ENCODE measurements at regions of chr2 and their contacts with region 1.

Region 1: DNA sequence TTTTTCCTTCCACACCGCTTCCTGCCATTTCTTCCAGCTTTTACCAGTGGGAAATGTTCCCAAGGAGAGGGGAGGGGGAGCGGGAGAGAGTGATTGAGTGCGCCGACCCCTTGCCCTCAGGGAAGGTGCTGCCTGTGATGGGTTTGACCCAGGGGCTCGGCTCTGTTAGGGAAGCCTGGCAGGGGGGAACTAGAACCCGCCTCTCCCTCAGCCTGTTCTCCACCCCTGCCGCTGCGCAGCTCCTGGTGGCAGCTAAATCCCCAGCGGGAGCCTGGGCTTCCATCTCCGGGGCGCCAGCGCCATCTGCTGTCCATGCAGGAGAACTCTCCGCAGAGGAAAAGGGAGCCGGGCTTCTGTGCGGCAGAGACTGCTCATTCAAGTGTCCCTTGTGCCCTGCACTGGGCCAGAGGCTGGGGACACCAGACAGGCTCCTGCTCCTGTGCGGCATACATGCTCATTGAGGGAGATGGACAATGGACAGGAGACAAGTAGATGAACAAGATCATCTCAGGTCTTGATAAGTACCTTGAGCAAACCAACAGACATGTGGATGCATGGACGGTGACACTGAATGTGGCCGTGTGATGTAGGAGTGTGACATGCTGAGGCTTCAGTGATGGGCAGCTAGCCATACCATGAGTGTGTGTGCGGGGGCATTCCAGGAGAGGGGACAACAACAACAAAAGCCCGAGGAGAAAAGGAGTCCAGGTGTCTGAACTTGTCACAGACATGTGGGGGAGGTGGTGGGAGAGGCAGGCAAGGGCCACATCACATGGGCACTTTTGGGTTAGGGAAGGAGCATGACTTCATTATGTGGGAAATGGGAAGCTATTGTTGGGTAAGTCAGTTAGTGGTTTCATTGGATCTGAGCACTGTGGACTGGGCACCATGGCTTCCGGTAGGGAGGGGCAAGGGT is 13.3 kb downstream of the CHPF start:
- DNase-seq: peak; percentile 70 to 82 (median 78)
- H3K4me3 ChIP-seq: no peak overlapping the region
- H3K4me3 Mint-ChIP-seq: peak overlapping the region in 1 of 2 donors; percentile 65
- H3K27ac ChIP-seq: no peak overlapping the region
- H3K27ac Mint-ChIP-seq: peak overlapping the region in 1 of 7 donors; percentile 70
- H3K4me1 ChIP-seq: no peaks in the 10 kb centered on the region
- H3K4me1 Mint-ChIP-seq: no peaks in the 10 kb centered on the region
- H3K27me3 ChIP-seq: peaks cover 15 to 34% of the 10 kb centered on the region in 2 donors
- H3K27me3 Mint-ChIP-seq: peaks cover 51 to 60% (median 58%) of the 10 kb centered on the region in 3 donors
- CTCF ChIP-seq: peak; percentile 93

Region 2: GRCh38 chr2:219402665-219403515 is 127.4 kb before region 1 on chr2:
- intact Hi-C with region 1: loop called (anchors 2 kb)
- DNase-seq: peak; percentile 54 to 72 (median 71)
- H3K4me3 ChIP-seq: no peak overlapping the region
- H3K4me3 Mint-ChIP-seq: no peak overlapping the region
- H3K27ac ChIP-seq: no peak overlapping the region
- H3K27ac Mint-ChIP-seq: no peak overlapping the region
- H3K4me1 ChIP-seq: peaks cover 18 to 20% of the 10 kb centered on the region in 2 donors
- H3K4me1 Mint-ChIP-seq: peaks cover 16% of the 10 kb centered on the region
- H3K27me3 ChIP-seq: no peaks in the 10 kb centered on the region
- H3K27me3 Mint-ChIP-seq: peaks cover 8 to 16% (median 11%) of the 10 kb centered on the region in 3 donors
- CTCF ChIP-seq: peak; percentile 94

Region 3: GRCh38 chr2:219459460-219460311 is 70.6 kb before region 1 on chr2:
- intact Hi-C with region 1: loop called (anchors 5 kb)
- DNase-seq: peak; percentile 15 to 38 (median 37)
- H3K4me3 ChIP-seq: no peak overlapping the region
- H3K4me3 Mint-ChIP-seq: no peak overlapping the region
- H3K27ac ChIP-seq: no peak overlapping the region
- H3K27ac Mint-ChIP-seq: no peak overlapping the region
- H3K4me1 ChIP-seq: peaks cover 0 to 6% of the 10 kb centered on the region in 2 donors
- H3K4me1 Mint-ChIP-seq: peaks cover 8% of the 10 kb centered on the region
- H3K27me3 ChIP-seq: no peaks in the 10 kb centered on the region
- H3K27me3 Mint-ChIP-seq: peaks cover 2 to 7% (median 4%) of the 10 kb centered on the region in 3 donors
- CTCF ChIP-seq: peak; percentile 90

Region 4: GRCh38 chr2:219475697-219476651 is 54.3 kb before region 1 on chr2:
- intact Hi-C with region 1: loop called (anchors 1 to 5 kb)
- DNase-seq: peak; percentile 19 to 38 (median 36)
- H3K4me3 ChIP-seq: no peak overlapping the region
- H3K4me3 Mint-ChIP-seq: no peak overlapping the region
- H3K27ac ChIP-seq: no peak overlapping the region
- H3K27ac Mint-ChIP-seq: peak overlapping the region in 1 of 7 donors; percentile 41
- H3K4me1 ChIP-seq: no peaks in the 10 kb centered on the region
- H3K4me1 Mint-ChIP-seq: peaks cover 2% of the 10 kb centered on the region
- H3K27me3 ChIP-seq: peaks cover 0 to 2% of the 10 kb centered on the region in 2 donors
- H3K27me3 Mint-ChIP-seq: peaks cover 7 to 22% (median 20%) of the 10 kb centered on the region in 3 donors
- CTCF ChIP-seq: peak; percentile 79

Region 5: DNA sequence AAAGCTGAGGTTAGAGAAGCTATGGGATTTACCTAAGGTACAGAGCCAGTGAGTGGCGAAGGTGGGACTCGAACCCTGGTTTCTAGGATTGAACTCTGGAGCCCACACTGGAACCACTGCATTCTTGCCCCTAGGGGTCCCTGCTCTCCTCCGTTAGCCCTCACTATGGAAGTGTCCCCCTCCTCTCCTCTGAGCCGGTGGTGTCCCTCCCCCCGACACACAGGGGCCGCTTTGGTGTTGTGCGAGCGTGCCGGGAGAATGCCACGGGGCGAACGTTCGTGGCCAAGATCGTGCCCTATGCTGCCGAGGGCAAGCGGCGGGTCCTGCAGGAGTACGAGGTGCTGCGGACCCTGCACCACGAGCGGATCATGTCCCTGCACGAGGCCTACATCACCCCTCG is 40.1 kb before region 1 on chr2:
- intact Hi-C with region 1: loop called (anchors 5 kb)
- DNase-seq: no peak
- H3K4me3 ChIP-seq: no peak overlapping the region
- H3K4me3 Mint-ChIP-seq: no peak overlapping the region
- H3K27ac ChIP-seq: no peak overlapping the region
- H3K27ac Mint-ChIP-seq: peak overlapping the region in 2 of 7 donors; percentile 38 to 48
- H3K4me1 ChIP-seq: no peaks in the 10 kb centered on the region
- H3K4me1 Mint-ChIP-seq: no peaks in the 10 kb centered on the region
- H3K27me3 ChIP-seq: peaks cover 24 to 47% of the 10 kb centered on the region in 2 donors
- H3K27me3 Mint-ChIP-seq: peaks cover 49 to 77% (median 56%) of the 10 kb centered on the region in 3 donors
- CTCF ChIP-seq: no peak

Region 6: GRCh38 chr2:219498280-219499057 is 31.8 kb before region 1 on chr2 and contains the start of gene GMPPA:
- intact Hi-C with region 1: loop called (anchors 5 kb)
- DNase-seq: peak; percentile 93 to 95 (median 94)
- H3K4me3 ChIP-seq: peak within 1 kb of the TSS; percentile 58 to 93 (median 80)
- H3K4me3 Mint-ChIP-seq: peak within 1 kb of the TSS; percentile 98 to 100
- H3K27ac ChIP-seq: peak within 1 kb of the TSS; percentile 89 to 90
- H3K27ac Mint-ChIP-seq: peak within 1 kb of the TSS; percentile 94 to 99 (median 97)
- H3K4me1 ChIP-seq: peaks cover 28 to 43% of the 10 kb centered on the region in 2 donors
- H3K4me1 Mint-ChIP-seq: peaks cover 38% of the 10 kb centered on the region
- H3K27me3 ChIP-seq: peaks cover 31 to 42% of the 10 kb centered on the region in 2 donors
- H3K27me3 Mint-ChIP-seq: peaks cover 42 to 46% (median 43%) of the 10 kb centered on the region in 3 donors
- CTCF ChIP-seq: no peak
- polyA plus RNA-seq, gene GMPPA: 35.5 to 71.2 (median 35.9) TPM